ENCODE measurements at regions of chr5 and their contacts with region 1.

Region 1: GRCh38 chr5:96868603-96869371 is 7.5 kb upstream of the ERAP2 start:
- DNase-seq: peak; percentile 58
- ATAC-seq: peak; percentile 95
- H3K4me3 Mint-ChIP-seq: no peak overlapping the region
- H3K27ac Mint-ChIP-seq: no peak overlapping the region
- H3K4me1 Mint-ChIP-seq: peaks cover 50% of the 10 kb centered on the region
- H3K27me3 Mint-ChIP-seq: peaks cover 2% of the 10 kb centered on the region

Region 2: GRCh38 chr5:96752341-96753016 is 116.3 kb before region 1 on chr5:
- CTCF ChIA-PET with region 1: interaction called, 11 read pairs
- POLR2A ChIA-PET with region 1: no interaction called
- DNase-seq: peak; percentile 67
- ATAC-seq: no peak
- H3K4me3 Mint-ChIP-seq: no peak overlapping the region
- H3K27ac Mint-ChIP-seq: no peak overlapping the region
- H3K4me1 Mint-ChIP-seq: no peaks in the 10 kb centered on the region
- H3K27me3 Mint-ChIP-seq: no peaks in the 10 kb centered on the region

Region 3: GRCh38 chr5:96838201-96839070 is 30.4 kb before region 1 on chr5:
- CTCF ChIA-PET with region 1: interaction called, 10 read pairs
- POLR2A ChIA-PET with region 1: no interaction called
- DNase-seq: no peak
- ATAC-seq: no peak
- H3K4me3 Mint-ChIP-seq: no peak overlapping the region
- H3K27ac Mint-ChIP-seq: no peak overlapping the region
- H3K4me1 Mint-ChIP-seq: peaks cover 14% of the 10 kb centered on the region
- H3K27me3 Mint-ChIP-seq: peaks cover 3% of the 10 kb centered on the region

Region 4: DNA sequence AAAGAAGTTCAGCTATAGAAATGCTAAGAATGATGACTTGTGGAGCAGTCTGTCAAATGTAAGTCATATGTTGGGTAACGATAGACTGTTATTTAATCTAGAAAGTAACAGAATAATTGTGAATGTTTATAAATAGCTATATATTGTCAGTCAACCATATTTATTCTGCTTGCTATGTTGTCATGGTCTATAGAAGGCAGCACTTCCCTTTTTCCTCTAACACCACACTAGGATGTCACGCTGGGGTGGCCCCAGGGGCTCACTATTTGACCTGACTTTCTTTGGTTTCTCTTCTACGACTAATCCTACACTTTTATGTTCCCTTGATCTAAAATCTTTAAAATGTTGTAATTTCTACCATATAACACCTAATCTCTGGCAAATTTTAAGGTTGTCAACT is 28.0 kb after region 1 on chr5:
- CTCF ChIA-PET with region 1: interaction called, 42 read pairs
- POLR2A ChIA-PET with region 1: interaction called, 9 read pairs
- DNase-seq: no peak
- ATAC-seq: peak; percentile 53
- H3K4me3 Mint-ChIP-seq: peak overlapping the region; percentile 69
- H3K27ac Mint-ChIP-seq: peak overlapping the region; percentile 88
- H3K4me1 Mint-ChIP-seq: peaks cover 38% of the 10 kb centered on the region
- H3K27me3 Mint-ChIP-seq: no peaks in the 10 kb centered on the region

Region 5: DNA sequence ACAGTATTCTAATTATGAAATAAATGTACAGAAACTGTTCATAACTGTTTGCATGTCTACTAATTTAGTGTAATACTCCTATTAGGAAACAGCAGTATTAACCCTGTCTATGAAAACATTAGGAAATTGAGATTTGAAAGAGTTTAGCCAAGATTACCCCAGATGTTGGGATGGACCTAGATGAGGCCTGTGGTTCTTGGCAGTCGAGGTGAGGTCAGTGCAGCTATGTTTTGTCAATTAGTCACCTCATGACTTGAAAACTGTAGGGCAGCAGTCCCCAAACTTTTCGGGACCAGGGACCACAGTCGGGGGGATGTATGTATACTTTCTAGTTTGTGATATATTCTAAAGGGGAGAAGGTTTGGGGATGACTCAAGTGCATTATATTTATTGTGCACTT is 71.8 kb after region 1 on chr5:
- CTCF ChIA-PET with region 1: interaction called, 24 read pairs
- POLR2A ChIA-PET with region 1: interaction called, 7 read pairs
- DNase-seq: no peak
- ATAC-seq: no peak
- H3K4me3 Mint-ChIP-seq: peak overlapping the region; percentile 46
- H3K27ac Mint-ChIP-seq: no peak overlapping the region
- H3K4me1 Mint-ChIP-seq: peaks cover 58% of the 10 kb centered on the region
- H3K27me3 Mint-ChIP-seq: no peaks in the 10 kb centered on the region

Region 6: DNA sequence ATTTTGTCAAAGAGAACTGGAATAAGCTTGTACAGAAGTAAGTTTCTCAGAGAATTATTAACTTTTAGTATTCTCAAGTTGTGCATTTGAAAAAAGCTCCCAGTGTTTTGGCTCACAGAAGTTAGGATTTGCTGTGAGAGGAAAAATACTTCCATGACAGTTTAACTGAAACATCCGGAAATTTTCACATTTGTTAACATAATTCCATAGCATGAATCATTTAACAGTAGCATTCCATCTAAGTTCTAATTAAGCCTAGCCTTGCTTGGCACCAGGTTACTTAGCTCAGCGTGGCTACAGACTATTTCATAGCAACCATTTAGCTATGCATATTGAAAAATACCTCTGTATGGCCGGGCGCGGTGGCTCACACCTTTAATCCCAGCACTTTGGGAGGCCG is 157.9 kb after region 1 on chr5:
- CTCF ChIA-PET with region 1: interaction called, 10 read pairs
- POLR2A ChIA-PET with region 1: no interaction called
- DNase-seq: no peak
- ATAC-seq: no peak
- H3K4me3 Mint-ChIP-seq: no peak overlapping the region
- H3K27ac Mint-ChIP-seq: no peak overlapping the region
- H3K4me1 Mint-ChIP-seq: peaks cover 14% of the 10 kb centered on the region
- H3K27me3 Mint-ChIP-seq: no peaks in the 10 kb centered on the region

Measured in activated CD8-positive, alpha-beta T cell treated with anti-CD3 and anti-CD28 coated beads, Interleukin-2, amount 10 ng/mL, durations not matched to agents 7 days and 5 days (primary cell).